HCT116 (cell line): ENCODE measurements at regions of chr5 and their contacts with region 1.

Region 1: DNA sequence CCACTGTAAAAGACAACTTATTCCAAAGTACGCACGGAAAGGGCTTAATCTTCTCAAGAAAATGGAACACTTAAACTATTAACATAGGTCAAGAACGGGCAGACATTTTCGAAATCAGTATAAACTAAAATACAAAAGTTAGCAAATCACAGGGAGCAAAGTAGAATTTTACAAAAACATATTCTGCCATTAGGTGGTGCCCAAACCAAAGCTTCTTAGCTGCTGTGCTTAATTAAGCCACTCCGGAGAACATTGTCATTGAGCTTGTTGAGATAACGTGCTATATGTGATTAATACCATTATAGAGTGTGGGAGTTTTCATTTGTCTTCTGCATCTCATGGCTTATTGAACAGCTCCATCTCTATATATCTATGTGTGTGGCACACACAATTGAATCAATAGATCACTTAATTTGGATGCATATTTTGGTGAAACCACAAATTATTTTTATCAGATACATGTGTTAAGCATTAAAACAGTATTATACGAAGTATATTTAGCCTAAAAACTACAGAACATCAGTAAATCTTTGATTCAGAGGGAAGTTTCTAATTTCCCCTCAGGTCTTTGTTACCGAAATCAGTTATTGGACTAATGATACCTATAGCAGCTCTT is 23.4 kb downstream of the UBLCP1 start:
- DNase-seq: no peak
- ATAC-seq: peak; percentile 50; the same call in 1 of the 2 replicates
- H3K4me3 ChIP-seq: no peak overlapping the region
- H3K27ac ChIP-seq: no peak overlapping the region
- H3K4me1 ChIP-seq: no peaks in the 10 kb centered on the region
- H3K27me3 ChIP-seq: no peaks in the 10 kb centered on the region
- CTCF ChIP-seq: peak; percentile 35 to 56 (median 46); a peak in 4 of 6 replicates
- POLR2A ChIP-seq: no peak
- RAD21 ChIP-seq: peak; percentile 75

Region 2: DNA sequence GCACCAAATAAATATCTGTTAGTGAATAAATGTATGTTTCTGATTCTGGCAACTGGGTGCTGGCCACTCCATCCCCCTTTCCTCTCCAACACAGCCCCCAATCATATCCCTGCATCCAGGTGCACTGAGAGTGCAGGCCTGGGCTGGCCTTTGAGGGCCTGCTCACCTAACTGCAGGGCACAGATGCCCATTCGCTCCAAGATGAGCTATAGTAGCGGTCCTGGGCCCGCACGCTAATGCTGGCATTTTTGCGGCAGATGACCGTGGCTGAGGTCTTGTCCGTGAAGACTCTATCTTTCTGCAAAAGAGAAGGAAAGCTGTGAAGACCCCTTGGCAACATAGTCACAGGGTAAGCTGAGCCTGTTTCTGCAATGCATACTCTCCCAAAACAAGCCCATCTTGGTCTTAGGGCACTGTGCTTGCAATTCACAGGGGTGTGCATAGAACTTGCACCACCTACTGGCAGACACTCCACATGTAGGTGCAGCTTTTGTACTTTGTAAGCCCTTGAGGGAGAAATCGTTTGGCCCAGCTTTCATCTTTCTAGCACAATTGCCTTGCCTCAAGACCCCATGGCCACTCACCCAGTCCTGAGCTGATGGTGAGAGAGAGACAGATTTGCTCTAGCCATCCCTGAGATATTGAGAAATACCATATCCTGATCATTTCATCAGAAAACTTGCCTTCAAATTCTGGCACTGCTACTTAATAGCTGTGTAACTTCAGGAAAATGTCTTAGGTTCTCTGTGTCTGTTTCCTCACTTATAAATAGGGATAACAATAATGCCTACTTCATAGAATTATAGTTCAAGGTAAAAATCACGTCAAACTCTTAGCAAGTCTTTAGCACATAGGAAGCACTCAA is 30.2 kb after region 1 on chr5:
- CTCF ChIA-PET with region 1: interaction called, 18 read pairs
- POLR2A ChIA-PET with region 1: no interaction called
- RAD21 ChIA-PET with region 1: no interaction called
- intact Hi-C with region 1: loop called (anchors 2 kb)
- DNase-seq: no peak
- ATAC-seq: peak; percentile 95
- H3K4me3 ChIP-seq: no peak overlapping the region
- H3K27ac ChIP-seq: no peak overlapping the region
- H3K4me1 ChIP-seq: no peaks in the 10 kb centered on the region
- H3K27me3 ChIP-seq: no peaks in the 10 kb centered on the region
- CTCF ChIP-seq: peak; percentile 69 to 82 (median 73)
- POLR2A ChIP-seq: no peak
- RAD21 ChIP-seq: peak; percentile 80

Region 3: GRCh38 chr5:159682623-159683022 is 396.1 kb after region 1 on chr5:
- CTCF ChIA-PET with region 1: no interaction called
- POLR2A ChIA-PET with region 1: no interaction called
- RAD21 ChIA-PET with region 1: no interaction called
- intact Hi-C with region 1: loop called (anchors 5 kb)
- DNase-seq: peak; percentile 12
- ATAC-seq: peak; percentile 50; the same call in 1 of the 2 replicates
- H3K4me3 ChIP-seq: no peak overlapping the region
- H3K27ac ChIP-seq: no peak overlapping the region
- H3K4me1 ChIP-seq: no peaks in the 10 kb centered on the region
- H3K27me3 ChIP-seq: no peaks in the 10 kb centered on the region
- CTCF ChIP-seq: peak; percentile 15 to 47 (median 44); a peak in 3 of 6 replicates
- POLR2A ChIP-seq: no peak
- RAD21 ChIP-seq: peak; percentile 74